Left ventricle myocardium inferior (tissue), 1 donor: ENCODE measurements at regions of chr12 and their contacts with region 1.

Region 1: GRCh38 chr12:14278294-14278953 is 87.1 kb upstream of the ATF7IP start:
- DNase-seq: no peak
- H3K4me3 ChIP-seq: no peak overlapping the region
- H3K27ac ChIP-seq: no peak overlapping the region
- H3K4me1 ChIP-seq: peaks cover under 1% of the 10 kb centered on the region
- H3K27me3 ChIP-seq: no peaks in the 10 kb centered on the region
- CTCF ChIP-seq: no peak

Region 2: GRCh38 chr12:14340371-14340770 is 61.9 kb after region 1 on chr12:
- intact Hi-C with region 1: loop called (anchors 5 kb)
- DNase-seq: no peak
- H3K4me3 ChIP-seq: no peak overlapping the region
- H3K27ac ChIP-seq: no peak overlapping the region
- H3K4me1 ChIP-seq: no peaks in the 10 kb centered on the region
- H3K27me3 ChIP-seq: no peaks in the 10 kb centered on the region
- CTCF ChIP-seq: no peak